ENCODE measurements at regions of chr4 and their contacts with region 1.

Region 1: GRCh38 chr4:57924951-57925350 is 814.8 kb upstream of the IGFBP7 start:
- DNase-seq: no peak
- ATAC-seq: no peak
- H3K4me3 ChIP-seq: no peak overlapping the region
- H3K27ac ChIP-seq: no peak overlapping the region
- H3K4me1 ChIP-seq: no peaks in the 10 kb centered on the region
- H3K27me3 ChIP-seq: no peaks in the 10 kb centered on the region

Region 2: GRCh38 chr4:57854748-57855147 is 70.2 kb before region 1 on chr4:
- intact Hi-C with region 1: no loop called
- DNase-seq: no peak
- ATAC-seq: no peak
- H3K4me3 ChIP-seq: no peak overlapping the region
- H3K27ac ChIP-seq: no peak overlapping the region
- H3K4me1 ChIP-seq: no peaks in the 10 kb centered on the region
- H3K27me3 ChIP-seq: no peaks in the 10 kb centered on the region

Region 3: GRCh38 chr4:57993926-57994325 is 69.0 kb after region 1 on chr4:
- intact Hi-C with region 1: loop called in 1 of 2 experiments (anchors 2 kb)
- DNase-seq: no peak
- ATAC-seq: no peak
- H3K4me3 ChIP-seq: no peak overlapping the region
- H3K27ac ChIP-seq: no peak overlapping the region
- H3K4me1 ChIP-seq: no peaks in the 10 kb centered on the region
- H3K27me3 ChIP-seq: no peaks in the 10 kb centered on the region

Measured in aorta (tissue), 5 donors.